ENCODE measurements at regions of chr9 and their contacts with region 1.

Region 1: GRCh38 chr9:127785023-127785932 is 556 bp upstream of the CDK9 start:
- DNase-seq: peak; percentile 85 to 97 (median 91)
- ATAC-seq: peak; percentile 53
- H3K4me3 ChIP-seq: peak overlapping the region; percentile 49 to 82
- H3K4me3 Mint-ChIP-seq: peak overlapping the region; percentile 89
- H3K27ac ChIP-seq: peak overlapping the region; percentile 73 to 94
- H3K27ac Mint-ChIP-seq: peak overlapping the region; percentile 96
- H3K4me1 ChIP-seq: peaks cover 66% of the 10 kb centered on the region
- H3K4me1 Mint-ChIP-seq: peaks cover 60% of the 10 kb centered on the region
- H3K27me3 ChIP-seq: no peaks in the 10 kb centered on the region
- H3K27me3 Mint-ChIP-seq: no peaks in the 10 kb centered on the region
- CTCF ChIP-seq: peak; percentile 74

Region 2: DNA sequence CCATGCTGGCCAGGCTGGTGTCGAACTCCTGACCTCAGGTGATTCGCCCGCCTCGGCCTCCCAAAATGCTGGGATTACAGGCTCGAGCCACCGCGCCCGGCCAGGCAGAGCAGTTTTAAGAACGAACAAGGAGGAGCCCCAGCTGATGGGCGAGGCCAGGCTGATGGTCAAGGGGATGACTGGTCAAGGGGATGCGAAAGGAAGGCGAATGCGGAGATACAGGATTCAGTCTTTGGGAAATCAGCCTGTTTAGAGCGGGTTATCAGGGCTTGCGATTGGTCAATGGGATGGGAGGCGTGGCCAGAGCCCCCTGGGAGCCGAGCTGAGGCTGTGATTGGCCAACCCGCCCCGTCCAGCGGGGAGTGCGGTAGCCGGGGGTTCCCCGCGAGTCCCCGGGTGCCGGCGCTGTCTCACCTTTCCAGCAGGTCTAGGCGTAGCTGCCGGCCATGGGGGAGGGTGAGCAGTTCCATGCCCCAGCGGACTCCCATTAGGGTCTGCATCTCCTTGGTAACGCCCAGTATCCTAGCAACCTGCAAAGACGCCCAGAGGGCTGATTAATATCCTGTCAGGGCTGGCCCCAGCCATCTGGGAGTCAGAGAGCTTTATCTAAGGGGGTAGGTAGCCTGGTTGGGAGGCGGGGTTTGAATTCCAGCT is 42.7 kb before region 1 on chr9:
- CTCF ChIA-PET with region 1: interaction called, 19 read pairs
- POLR2A ChIA-PET with region 1: interaction called, 4 read pairs
- intact Hi-C with region 1: no loop called
- DNase-seq: no peak
- ATAC-seq: no peak
- H3K4me3 ChIP-seq: no peak overlapping the region
- H3K4me3 Mint-ChIP-seq: no peak overlapping the region
- H3K27ac ChIP-seq: no peak overlapping the region
- H3K27ac Mint-ChIP-seq: no peak overlapping the region
- H3K4me1 ChIP-seq: peaks cover 13% of the 10 kb centered on the region
- H3K4me1 Mint-ChIP-seq: peaks cover 15% of the 10 kb centered on the region
- H3K27me3 ChIP-seq: no peaks in the 10 kb centered on the region
- H3K27me3 Mint-ChIP-seq: no peaks in the 10 kb centered on the region
- CTCF ChIP-seq: no peak

Region 3: DNA sequence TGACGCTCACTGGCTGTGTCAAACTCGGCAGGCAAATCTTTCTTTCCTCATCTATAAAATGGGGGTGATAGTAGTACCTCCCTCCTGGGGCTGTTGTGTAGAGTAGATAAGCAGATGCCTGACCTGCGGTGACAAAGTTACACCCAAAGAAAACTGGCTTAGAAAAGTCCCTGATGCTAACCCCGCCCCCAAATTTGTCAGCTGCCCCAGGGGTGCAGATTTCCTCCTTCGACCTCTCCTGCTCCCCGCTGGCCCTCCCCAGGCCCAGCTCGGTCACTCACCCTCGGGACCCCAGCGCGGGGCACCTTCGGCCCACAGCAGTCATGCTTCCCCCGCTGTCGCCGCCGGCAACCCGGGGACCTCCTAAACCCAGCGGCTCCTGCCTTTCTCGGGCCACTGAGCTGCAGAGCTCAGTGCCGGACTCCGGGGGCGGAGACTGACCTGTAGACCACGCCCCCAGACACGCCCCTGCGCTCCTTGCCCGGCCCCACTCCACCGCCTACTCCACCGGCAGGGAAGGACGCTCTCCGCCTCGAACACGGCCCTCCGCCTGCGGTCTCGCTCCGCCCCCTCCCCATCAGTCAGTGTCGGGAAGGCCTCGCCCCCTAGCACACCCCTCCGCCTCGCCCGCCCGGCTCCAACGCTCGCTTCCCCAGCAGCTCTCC is 14.2 kb before region 1 on chr9:
- CTCF ChIA-PET with region 1: interaction called, 84 read pairs
- POLR2A ChIA-PET with region 1: interaction called, 46 read pairs
- intact Hi-C with region 1: loop called (anchors 1 kb)
- DNase-seq: peak; percentile 81 to 96 (median 93)
- ATAC-seq: peak; percentile 79
- H3K4me3 ChIP-seq: peak overlapping the region; percentile 55 to 65
- H3K4me3 Mint-ChIP-seq: peak overlapping the region; percentile 88
- H3K27ac ChIP-seq: peak overlapping the region; percentile 58 to 83
- H3K27ac Mint-ChIP-seq: peak overlapping the region; percentile 96
- H3K4me1 ChIP-seq: peaks cover 75% of the 10 kb centered on the region
- H3K4me1 Mint-ChIP-seq: peaks cover 73% of the 10 kb centered on the region
- H3K27me3 ChIP-seq: no peaks in the 10 kb centered on the region
- H3K27me3 Mint-ChIP-seq: no peaks in the 10 kb centered on the region
- CTCF ChIP-seq: no peak

Region 4: DNA sequence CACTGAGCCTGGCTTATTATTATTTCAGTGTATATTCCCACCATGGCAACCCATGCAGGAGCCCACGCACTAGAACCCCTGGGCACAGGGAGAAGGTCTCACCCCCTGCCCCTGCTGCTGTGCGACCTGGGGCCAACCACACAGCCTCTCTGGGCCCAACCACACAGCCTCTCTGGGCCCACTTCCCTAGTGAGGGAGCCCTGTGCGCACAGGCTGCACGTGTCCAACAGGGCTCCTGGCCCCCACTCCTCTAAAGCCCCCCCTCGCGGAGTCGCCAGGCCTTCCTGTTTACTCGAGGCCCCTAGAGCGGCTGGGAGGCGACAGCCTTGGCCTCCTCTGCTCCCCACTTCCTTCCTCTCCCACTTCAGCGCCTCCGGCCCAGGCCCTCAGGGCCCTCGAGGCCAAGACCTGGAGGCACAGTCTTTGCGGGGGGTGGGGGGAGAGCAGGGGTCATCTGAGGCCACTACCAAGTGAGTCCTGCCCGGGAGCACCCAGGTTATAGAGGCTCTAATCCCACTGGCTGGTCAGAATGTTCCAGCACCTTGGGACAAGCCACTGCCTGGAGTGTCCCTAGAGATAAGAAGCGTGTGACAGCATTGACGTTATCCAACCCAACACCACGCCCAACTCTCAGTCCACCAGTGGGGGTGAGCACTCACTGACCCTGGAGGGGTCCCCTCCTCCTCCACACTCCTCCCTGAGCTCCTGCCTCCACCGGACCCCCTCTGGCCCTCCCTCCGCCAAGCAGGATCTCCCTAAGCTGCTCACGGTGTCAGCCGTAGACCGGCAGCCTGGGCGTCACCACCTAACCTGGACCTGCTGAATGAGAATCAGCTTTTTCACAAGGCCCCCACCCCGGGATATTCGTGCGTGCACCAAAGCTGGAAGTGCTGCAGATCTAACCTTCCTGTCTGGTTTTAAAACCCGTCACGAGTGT is 77.1 kb after region 1 on chr9:
- CTCF ChIA-PET with region 1: interaction called, 85 read pairs
- POLR2A ChIA-PET with region 1: interaction called, 10 read pairs
- intact Hi-C with region 1: no loop called
- DNase-seq: peak; percentile 38 to 86 (median 69)
- ATAC-seq: peak; percentile 65
- H3K4me3 ChIP-seq: peak overlapping the region in 1 of 2 experiments; percentile 26
- H3K4me3 Mint-ChIP-seq: peak overlapping the region; percentile 67
- H3K27ac ChIP-seq: peak overlapping the region; percentile 40 to 79
- H3K27ac Mint-ChIP-seq: peak overlapping the region; percentile 93
- H3K4me1 ChIP-seq: peaks cover 52% of the 10 kb centered on the region
- H3K4me1 Mint-ChIP-seq: peaks cover 55% of the 10 kb centered on the region
- H3K27me3 ChIP-seq: no peaks in the 10 kb centered on the region
- H3K27me3 Mint-ChIP-seq: no peaks in the 10 kb centered on the region
- CTCF ChIP-seq: no peak

Region 5: GRCh38 chr9:128127990-128128835 is 342.9 kb after region 1 on chr9:
- CTCF ChIA-PET with region 1: no interaction called
- POLR2A ChIA-PET with region 1: no interaction called
- intact Hi-C with region 1: loop called (anchors 1 kb)
- DNase-seq: peak; percentile 69 to 95 (median 83)
- ATAC-seq: peak; percentile 81
- H3K4me3 ChIP-seq: peak overlapping the region; percentile 99 to 100
- H3K4me3 Mint-ChIP-seq: peak overlapping the region; percentile 99
- H3K27ac ChIP-seq: peak overlapping the region; percentile 99
- H3K27ac Mint-ChIP-seq: peak overlapping the region; percentile 99
- H3K4me1 ChIP-seq: peaks cover 31% of the 10 kb centered on the region
- H3K4me1 Mint-ChIP-seq: peaks cover 38% of the 10 kb centered on the region
- H3K27me3 ChIP-seq: no peaks in the 10 kb centered on the region
- H3K27me3 Mint-ChIP-seq: peaks cover 2% of the 10 kb centered on the region
- CTCF ChIP-seq: no peak

Measured in CD8-positive, alpha-beta T cell (primary cell).